Activated CD8-positive, alpha-beta T cell treated with anti-CD3 and anti-CD28 coated beads for 36 hours (primary cell): ENCODE measurements at regions of chr10 and their contacts with region 1.

Region 1: DNA sequence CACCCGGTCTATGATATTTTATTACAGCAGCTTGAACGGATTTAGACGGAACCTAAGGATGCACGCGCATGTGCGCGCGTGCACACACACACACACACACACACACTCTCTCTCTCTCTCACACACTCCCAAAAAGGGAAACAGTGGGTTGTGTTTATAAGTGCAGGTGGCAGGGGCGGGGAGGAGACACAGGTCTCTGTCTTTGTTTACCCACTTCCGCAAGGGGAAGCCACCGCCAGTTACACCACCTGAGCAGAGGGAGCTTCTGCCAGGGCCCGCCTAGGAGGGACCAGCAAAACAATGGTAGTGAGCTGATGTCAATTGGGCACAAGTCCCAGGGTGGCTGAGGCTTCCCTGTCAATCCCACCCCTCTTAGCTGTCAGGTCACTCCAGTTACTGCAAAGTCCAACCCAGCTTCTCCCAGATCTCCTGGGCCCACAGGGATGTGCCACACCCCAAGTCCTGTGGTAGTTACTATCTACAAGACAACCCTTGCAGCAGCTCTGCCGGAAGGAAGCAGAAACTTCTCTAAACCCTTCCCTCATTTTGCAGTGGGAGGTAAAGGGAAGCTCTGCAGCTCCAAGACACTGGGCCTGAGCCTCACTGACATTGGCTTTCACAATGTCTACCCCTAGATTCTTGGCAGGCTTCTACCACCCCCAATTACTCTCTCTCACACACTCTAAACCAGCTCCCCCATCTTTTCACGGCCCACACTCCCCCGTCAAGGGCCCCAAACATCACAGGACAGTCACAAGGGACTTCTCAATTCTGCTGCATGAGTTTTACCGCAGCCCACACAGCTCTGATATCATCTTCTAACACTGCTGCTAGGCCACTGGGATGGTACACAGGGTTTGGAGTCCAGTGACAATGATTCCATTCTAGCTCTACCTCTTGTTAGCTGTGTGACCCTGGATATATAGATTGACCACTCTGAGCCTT is 17.6 kb downstream of the ANXA11 start:
- DNase-seq: peak; percentile 90
- ATAC-seq: peak; percentile 78
- H3K4me3 Mint-ChIP-seq: peak overlapping the region; percentile 68
- H3K27ac Mint-ChIP-seq: peak overlapping the region; percentile 95
- H3K4me1 Mint-ChIP-seq: peaks cover 87% of the 10 kb centered on the region
- H3K27me3 Mint-ChIP-seq: no peaks in the 10 kb centered on the region
- CTCF ChIP-seq: no peak

Region 2: DNA sequence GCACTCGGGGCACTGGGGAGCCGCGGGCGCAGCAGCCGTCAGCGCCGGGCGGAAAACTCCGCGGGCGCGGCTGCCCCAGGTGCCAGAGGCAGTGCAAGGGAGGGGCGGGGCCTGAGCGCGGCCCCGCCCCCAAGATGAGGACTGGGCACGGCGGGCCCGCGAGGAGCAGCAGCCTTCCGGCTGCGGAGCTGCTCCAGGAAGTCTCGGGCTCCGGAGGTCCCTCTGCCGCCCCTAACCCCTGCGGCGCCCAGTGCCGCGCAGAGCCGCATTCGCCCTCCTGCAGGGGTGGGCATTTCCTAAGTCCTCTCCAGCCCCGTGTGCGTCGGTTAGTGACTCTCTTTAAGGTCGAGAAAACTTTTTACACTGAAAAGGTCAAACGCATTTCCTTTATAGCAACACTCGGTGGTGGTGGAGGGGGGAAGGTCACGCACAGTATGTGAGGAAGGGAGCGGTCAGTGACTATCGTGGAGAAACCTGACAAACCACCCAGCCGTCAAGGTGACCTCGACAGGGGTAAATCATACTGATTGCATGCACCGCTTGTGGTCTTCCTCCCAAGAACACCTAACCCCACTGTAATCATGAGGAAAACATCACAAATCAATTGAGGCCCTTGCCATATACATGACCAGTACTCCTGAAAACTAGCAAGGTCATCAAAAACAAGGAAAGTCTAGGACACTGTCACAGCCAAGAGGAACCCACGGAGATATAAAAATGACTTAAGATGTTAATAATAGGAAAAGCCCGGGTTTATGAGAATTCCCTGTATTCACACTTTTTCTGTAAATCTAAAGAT is 17.9 kb after region 1 on chr10 and contains the start of gene ANXA11:
- CTCF ChIA-PET with region 1: interaction called, 24 read pairs
- POLR2A ChIA-PET with region 1: interaction called, 49 read pairs
- intact Hi-C with region 1: loop called (anchors 1 kb)
- DNase-seq: peak; percentile 87
- ATAC-seq: peak; percentile 70
- H3K4me3 Mint-ChIP-seq: peak within 1 kb of the TSS; percentile 92
- H3K27ac Mint-ChIP-seq: peak within 1 kb of the TSS; percentile 98
- H3K4me1 Mint-ChIP-seq: peaks cover 44% of the 10 kb centered on the region
- H3K27me3 Mint-ChIP-seq: no peaks in the 10 kb centered on the region
- CTCF ChIP-seq: no peak
- total RNA-seq, gene ANXA11: 226 to 238 TPM